ENCODE measurements at regions of chr3 and their contacts with region 1.

Region 1: GRCh38 chr3:129934234-129935123 is 40.0 kb upstream of the TRH start:
- DNase-seq: peak; percentile 44
- H3K4me3 ChIP-seq: peak overlapping the region; percentile 52
- H3K27ac ChIP-seq: no peak overlapping the region
- H3K4me1 ChIP-seq: no peaks in the 10 kb centered on the region
- H3K27me3 ChIP-seq: no peaks in the 10 kb centered on the region

Region 2: GRCh38 chr3:129633751-129634392 is 300.6 kb before region 1 on chr3:
- in situ Hi-C with region 1: loop called (anchors 10 kb)
- DNase-seq: no peak
- H3K4me3 ChIP-seq: no peak overlapping the region
- H3K27ac ChIP-seq: no peak overlapping the region
- H3K4me1 ChIP-seq: no peaks in the 10 kb centered on the region
- H3K27me3 ChIP-seq: no peaks in the 10 kb centered on the region

Region 3: GRCh38 chr3:130111185-130111864 is 176.8 kb after region 1 on chr3:
- in situ Hi-C with region 1: no loop called
- DNase-seq: peak; percentile 99
- H3K4me3 ChIP-seq: peak overlapping the region; percentile 89
- H3K27ac ChIP-seq: peak overlapping the region; percentile 94
- H3K4me1 ChIP-seq: peaks cover 6% of the 10 kb centered on the region
- H3K27me3 ChIP-seq: no peaks in the 10 kb centered on the region

Measured in GM23248 (cell line).